ENCODE measurements at regions of chr2 and their contacts with region 1.

Region 1: DNA sequence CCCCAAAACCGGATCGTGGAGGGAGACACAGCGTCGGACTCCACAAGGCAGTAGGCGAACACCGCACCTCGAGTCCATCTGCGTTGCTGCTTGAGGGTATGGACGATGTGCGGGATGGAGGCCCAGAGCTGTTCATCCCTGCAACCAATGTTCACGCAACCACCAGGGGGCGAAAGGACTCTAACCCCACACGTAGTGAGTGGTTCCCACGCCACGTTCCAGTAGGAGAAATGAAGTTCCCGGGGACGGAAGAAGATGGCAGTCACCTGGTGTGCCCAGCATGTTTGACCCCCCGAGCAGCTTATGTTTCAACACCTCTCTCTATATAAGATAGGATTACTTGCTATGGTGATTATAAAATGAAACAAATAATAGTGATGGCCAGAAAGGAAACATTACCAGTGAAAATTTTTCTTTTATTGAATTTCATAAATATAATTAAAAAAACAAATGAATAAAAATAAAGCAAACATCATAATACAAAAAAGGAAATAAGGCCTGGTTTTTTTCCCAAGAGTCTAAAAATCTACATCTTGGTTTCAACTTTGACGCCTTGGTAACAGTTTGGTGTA is 184.3 kb downstream of the SH3BP4 start:
- DNase-seq: peak; percentile 82 to 88 (median 86)
- ATAC-seq: peak; percentile 80
- H3K4me3 ChIP-seq: no peak overlapping the region
- H3K27ac ChIP-seq: no peak overlapping the region
- H3K4me1 ChIP-seq: no peaks in the 10 kb centered on the region
- H3K27me3 ChIP-seq: no peaks in the 10 kb centered on the region
- CTCF ChIP-seq: peak; percentile 56 to 90 (median 78)
- POLR2A ChIP-seq: no peak

Region 2: GRCh38 chr2:234840336-234840735 is 295.7 kb before region 1 on chr2:
- intact Hi-C with region 1: no loop called
- DNase-seq: peak; percentile 28 to 58 (median 45)
- ATAC-seq: peak; percentile 83
- H3K4me3 ChIP-seq: no peak overlapping the region
- H3K27ac ChIP-seq: peak overlapping the region in 2 of 4 donors; percentile 3 to 47
- H3K4me1 ChIP-seq: peaks cover 6% of the 10 kb centered on the region
- H3K27me3 ChIP-seq: no peaks in the 10 kb centered on the region
- CTCF ChIP-seq: no peak
- POLR2A ChIP-seq: no peak

Region 3: DNA sequence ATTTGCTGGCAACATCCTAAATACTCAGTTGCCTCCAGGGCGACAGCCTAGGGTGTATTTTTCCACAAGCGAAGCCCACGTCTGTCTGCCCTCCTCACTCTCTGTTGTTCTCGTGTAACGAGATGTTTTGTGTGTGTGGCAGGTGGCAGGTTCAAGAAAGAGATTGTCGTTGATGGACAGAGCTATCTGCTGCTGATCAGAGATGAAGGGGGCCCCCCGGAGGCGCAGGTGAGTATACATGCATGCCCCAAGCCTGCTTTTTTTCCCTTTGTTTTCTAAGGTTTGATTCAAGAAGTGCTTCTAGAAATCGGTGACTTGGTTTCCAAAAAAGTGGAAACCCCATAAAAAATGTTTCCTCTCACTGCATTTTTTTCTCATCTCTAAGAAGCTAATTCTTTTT is 604.7 kb after region 1 on chr2:
- intact Hi-C with region 1: loop called (anchors 5 kb)
- DNase-seq: no peak
- ATAC-seq: no peak
- H3K4me3 ChIP-seq: no peak overlapping the region
- H3K27ac ChIP-seq: no peak overlapping the region
- H3K4me1 ChIP-seq: no peaks in the 10 kb centered on the region
- H3K27me3 ChIP-seq: no peaks in the 10 kb centered on the region
- CTCF ChIP-seq: no peak
- POLR2A ChIP-seq: no peak

Measured in body of pancreas (tissue), 4 donors.